ENCODE measurements at regions of chr6 and their contacts with region 1.

Region 1: GRCh38 chr6:20688710-20689500 is 154.6 kb downstream of the CDKAL1 start:
- DNase-seq: no peak
- H3K4me3 Mint-ChIP-seq: peak overlapping the region; percentile 11
- H3K27ac Mint-ChIP-seq: peak overlapping the region; percentile 10
- H3K4me1 Mint-ChIP-seq: peaks cover 18% of the 10 kb centered on the region
- H3K27me3 Mint-ChIP-seq: no peaks in the 10 kb centered on the region

Region 2: GRCh38 chr6:20202324-20202658 is 486.6 kb before region 1 on chr6:
- intact Hi-C with region 1: loop called (anchors 10 kb)
- DNase-seq: no peak
- H3K4me3 Mint-ChIP-seq: no peak overlapping the region
- H3K27ac Mint-ChIP-seq: peak overlapping the region; percentile 30
- H3K4me1 Mint-ChIP-seq: peaks cover 77% of the 10 kb centered on the region
- H3K27me3 Mint-ChIP-seq: no peaks in the 10 kb centered on the region

Region 3: DNA sequence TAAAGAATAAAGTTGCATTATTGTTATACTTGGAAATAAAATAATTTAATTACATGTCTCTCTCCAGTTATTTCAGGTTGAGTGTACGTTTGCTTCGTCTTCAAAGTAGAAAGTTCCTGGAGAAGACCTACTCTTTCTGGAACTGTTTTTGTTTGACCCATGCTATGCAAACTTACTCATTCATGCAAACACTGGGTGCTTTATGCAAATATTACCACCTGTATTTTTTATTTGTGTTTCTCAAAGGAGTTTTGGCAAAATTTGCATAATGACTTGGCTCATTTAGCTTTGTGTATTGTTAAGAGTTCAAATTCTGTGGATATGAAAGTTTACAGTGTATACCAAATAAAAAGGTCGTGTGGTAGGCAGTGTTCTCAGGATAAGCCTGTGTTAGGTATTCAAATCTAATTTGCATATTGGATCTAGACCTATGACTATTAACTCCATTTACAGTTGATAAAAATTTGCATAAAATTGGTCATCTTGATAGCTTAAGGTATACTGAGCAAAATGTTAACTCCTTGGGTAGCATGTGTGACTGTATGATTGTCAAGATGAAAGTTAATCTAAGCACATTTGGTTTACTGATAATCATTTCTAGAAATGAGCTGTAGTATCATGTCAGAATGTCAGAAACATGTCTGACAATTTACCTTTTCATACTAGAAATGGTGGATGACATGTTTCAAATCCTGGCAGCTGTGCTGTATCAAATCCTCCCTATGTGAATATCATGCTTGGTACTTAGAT is 89.4 kb before region 1 on chr6:
- intact Hi-C with region 1: loop called (anchors 10 kb)
- DNase-seq: no peak
- H3K4me3 Mint-ChIP-seq: no peak overlapping the region
- H3K27ac Mint-ChIP-seq: no peak overlapping the region
- H3K4me1 Mint-ChIP-seq: peaks cover 9% of the 10 kb centered on the region
- H3K27me3 Mint-ChIP-seq: no peaks in the 10 kb centered on the region